PC-3 (cell line): ENCODE measurements at regions of chr19 and their contacts with region 1.

Region 1: DNA sequence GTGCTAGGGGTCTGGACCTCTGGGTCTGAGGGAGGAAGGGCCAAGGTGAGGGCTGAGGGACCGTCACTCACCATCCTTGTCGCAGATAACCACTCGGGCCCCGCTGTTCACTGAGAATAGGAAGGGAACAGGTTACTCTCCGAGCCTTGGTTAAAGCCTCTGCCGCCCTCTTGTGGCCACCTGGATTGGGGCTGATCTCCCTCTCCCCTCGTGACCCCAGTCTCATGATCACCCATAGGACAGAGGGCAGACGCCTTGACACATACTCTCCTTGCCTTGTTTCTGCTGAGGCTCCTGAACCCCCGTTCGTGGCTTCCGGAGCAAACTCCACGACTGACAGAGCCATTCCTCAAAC is 580 bp downstream of the HSD17B14 start:
- DNase-seq: peak; percentile 87
- ATAC-seq: peak; percentile 81
- H3K4me3 ChIP-seq: peak overlapping the region; percentile 69
- H3K27ac ChIP-seq: no peak overlapping the region
- H3K4me1 ChIP-seq: peaks cover 9% of the 10 kb centered on the region; the same call in 1 of the 2 replicates
- H3K27me3 ChIP-seq: no peaks in the 10 kb centered on the region
- CTCF ChIP-seq: peak; percentile 88

Region 2: DNA sequence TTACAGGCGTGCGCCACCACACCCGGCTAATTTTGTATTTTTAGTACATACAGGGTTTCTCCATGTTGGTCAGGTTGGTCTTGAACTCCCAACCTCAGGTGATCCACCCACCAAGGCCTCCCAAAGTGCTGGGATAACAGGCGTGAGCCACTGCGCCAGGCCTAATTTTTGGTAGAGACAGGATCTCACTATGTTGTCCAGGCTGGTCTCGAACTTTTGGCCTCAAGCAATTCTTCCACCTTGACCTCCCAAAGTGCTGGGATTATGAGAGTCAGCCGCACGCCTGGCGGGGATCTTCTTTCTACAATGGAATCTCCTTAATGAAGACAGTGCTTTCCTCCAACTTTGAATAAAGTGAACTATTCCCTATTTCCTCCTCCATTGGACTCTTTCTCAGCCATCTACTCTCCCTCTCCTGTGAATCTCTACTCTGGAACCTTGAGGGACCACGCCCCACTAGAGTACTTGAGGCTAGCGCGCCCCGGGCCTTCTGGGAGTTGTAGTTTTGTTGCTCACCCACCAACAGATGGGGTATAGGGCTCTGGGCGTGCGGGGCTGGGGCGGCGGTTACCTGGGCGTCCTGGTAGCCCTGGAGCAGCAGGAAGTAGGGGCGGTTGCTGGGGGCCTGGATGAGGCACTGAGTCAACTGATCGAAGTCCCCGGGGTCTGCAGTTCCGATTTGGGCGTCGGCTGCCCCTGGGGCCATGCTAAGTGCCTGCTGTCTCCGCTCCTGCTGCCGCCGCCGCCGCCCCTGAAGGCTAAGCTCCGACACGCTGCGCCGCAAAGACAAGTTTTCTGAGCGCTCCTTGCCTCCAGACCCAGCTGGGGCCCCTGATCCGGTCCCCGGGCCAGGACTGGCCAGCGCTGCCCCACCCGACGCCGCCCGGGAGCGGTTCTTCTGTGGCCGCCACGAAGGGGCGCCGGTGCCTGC is 100.8 kb before region 1 on chr19:
- CTCF ChIA-PET with region 1: no interaction called
- POLR2A ChIA-PET with region 1: no interaction called
- intact Hi-C with region 1: no loop called
- DNase-seq: no peak
- ATAC-seq: no peak
- H3K4me3 ChIP-seq: no peak overlapping the region
- H3K27ac ChIP-seq: no peak overlapping the region
- H3K4me1 ChIP-seq: no peaks in the 10 kb centered on the region; the same call in 1 of the 2 replicates
- H3K27me3 ChIP-seq: no peaks in the 10 kb centered on the region
- CTCF ChIP-seq: no peak

Region 3: DNA sequence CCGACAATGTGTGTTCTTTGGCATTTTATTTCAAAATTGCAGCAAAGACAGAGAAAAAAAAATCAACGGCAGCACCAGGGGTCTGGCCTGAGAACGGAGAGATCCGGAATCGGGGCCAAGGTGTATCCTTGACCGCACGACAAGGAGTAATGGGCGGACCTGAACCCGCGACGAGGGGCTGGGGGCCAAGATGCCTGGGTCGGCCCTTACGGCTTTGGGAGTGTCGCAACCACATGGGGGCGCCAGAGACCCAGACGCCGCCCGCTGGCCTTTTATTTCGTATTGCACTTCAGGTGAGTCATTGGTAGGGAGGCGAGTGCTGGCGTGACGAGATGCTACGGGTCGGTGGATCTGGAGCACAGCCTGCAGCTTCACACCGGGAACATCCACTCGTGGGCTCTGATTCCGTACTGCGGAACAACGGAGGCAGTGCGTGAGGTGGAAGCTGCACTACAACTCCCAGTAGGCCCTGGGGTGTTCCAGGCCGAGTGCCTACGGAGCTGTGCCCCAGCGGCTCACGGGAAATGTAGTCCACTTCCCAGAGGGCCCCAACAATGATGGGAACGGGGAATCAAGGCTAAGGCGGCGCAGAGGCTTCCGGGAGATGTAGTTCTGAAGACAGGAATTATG is 40.5 kb before region 1 on chr19:
- CTCF ChIA-PET with region 1: interaction called, 7 read pairs
- POLR2A ChIA-PET with region 1: no interaction called
- intact Hi-C with region 1: loop called (anchors 1 kb)
- DNase-seq: peak; percentile 86
- ATAC-seq: peak; percentile 99
- H3K4me3 ChIP-seq: peak overlapping the region; percentile 61
- H3K27ac ChIP-seq: no peak overlapping the region
- H3K4me1 ChIP-seq: no peaks in the 10 kb centered on the region
- H3K27me3 ChIP-seq: no peaks in the 10 kb centered on the region
- CTCF ChIP-seq: peak; percentile 94

Region 4: DNA sequence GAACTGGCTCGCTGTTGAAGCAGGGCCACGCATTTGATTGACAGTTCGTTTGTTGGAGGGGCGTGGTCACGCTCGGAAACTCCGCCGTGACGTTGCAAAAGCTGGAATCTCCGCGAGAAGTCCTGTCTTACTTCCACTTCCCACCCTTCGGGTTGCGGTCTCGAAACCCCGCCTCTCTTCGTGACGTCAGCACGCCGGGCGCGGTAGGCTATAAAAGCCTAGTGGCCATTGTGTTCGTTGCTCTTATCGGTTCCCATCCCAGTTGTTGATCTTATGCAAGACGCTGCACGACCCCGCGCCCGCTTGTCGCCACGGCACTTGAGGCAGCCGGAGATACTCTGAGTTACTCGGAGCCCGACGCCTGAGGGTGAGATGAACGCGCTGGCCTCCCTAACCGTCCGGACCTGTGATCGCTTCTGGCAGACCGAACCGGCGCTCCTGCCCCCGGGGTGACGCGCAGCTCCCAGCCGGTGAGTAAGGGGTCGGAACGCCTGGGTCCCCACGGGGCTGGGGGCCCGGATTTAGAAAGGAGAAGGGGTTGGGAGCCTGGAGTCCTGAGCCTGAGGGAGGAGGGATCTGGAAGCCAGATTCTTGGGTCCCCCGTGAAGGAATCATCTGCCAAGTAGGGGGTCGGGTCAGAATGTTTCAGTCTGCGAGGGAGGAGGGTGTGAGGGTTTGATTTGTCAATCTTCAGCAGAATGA is 36.6 kb after region 1 on chr19 and contains the start of gene PPP1R15A:
- CTCF ChIA-PET with region 1: interaction called, 3 read pairs
- POLR2A ChIA-PET with region 1: interaction called, 3 read pairs
- intact Hi-C with region 1: loop called (anchors 2 kb)
- DNase-seq: peak; percentile 98
- ATAC-seq: peak; percentile 32
- H3K4me3 ChIP-seq: peak within 1 kb of the TSS; percentile 100
- H3K27ac ChIP-seq: peak within 1 kb of the TSS; percentile 95
- H3K4me1 ChIP-seq: peaks cover 15% of the 10 kb centered on the region
- H3K27me3 ChIP-seq: no peaks in the 10 kb centered on the region
- CTCF ChIP-seq: no peak
- total RNA-seq, gene PPP1R15A: 78.0 and 105 TPM in 2 replicates